MCF 10A (cell line): ENCODE measurements at regions of chr4 and their contacts with region 1.

Region 1: GRCh38 chr4:108060164-108060563 is 70.5 kb downstream of the HADH start:
- DNase-seq: peak; percentile 45
- H3K4me3 Mint-ChIP-seq: no peak overlapping the region
- H3K27ac Mint-ChIP-seq: no peak overlapping the region
- H3K4me1 Mint-ChIP-seq: peaks cover 6% of the 10 kb centered on the region
- H3K27me3 Mint-ChIP-seq: no peaks in the 10 kb centered on the region
- CTCF ChIP-seq: peak; percentile 38

Region 2: GRCh38 chr4:108007984-108008383 is 52.2 kb before region 1 on chr4:
- CTCF ChIA-PET with region 1: no interaction called
- POLR2A ChIA-PET with region 1: no interaction called
- intact Hi-C with region 1: no loop called
- DNase-seq: no peak
- H3K4me3 Mint-ChIP-seq: no peak overlapping the region
- H3K27ac Mint-ChIP-seq: no peak overlapping the region
- H3K4me1 Mint-ChIP-seq: peaks cover 13% of the 10 kb centered on the region
- H3K27me3 Mint-ChIP-seq: no peaks in the 10 kb centered on the region
- CTCF ChIP-seq: no peak

Region 3: GRCh38 chr4:108018040-108018883 is 41.9 kb before region 1 on chr4:
- CTCF ChIA-PET with region 1: interaction called, 31 read pairs
- POLR2A ChIA-PET with region 1: no interaction called
- intact Hi-C with region 1: no loop called
- DNase-seq: peak; percentile 82
- H3K4me3 Mint-ChIP-seq: no peak overlapping the region
- H3K27ac Mint-ChIP-seq: peak overlapping the region; percentile 39
- H3K4me1 Mint-ChIP-seq: no peaks in the 10 kb centered on the region
- H3K27me3 Mint-ChIP-seq: no peaks in the 10 kb centered on the region
- CTCF ChIP-seq: peak; percentile 72

Region 4: GRCh38 chr4:108030332-108030731 is 29.8 kb before region 1 on chr4:
- CTCF ChIA-PET with region 1: interaction called, 14 read pairs
- POLR2A ChIA-PET with region 1: no interaction called
- intact Hi-C with region 1: no loop called
- DNase-seq: peak; percentile 51
- H3K4me3 Mint-ChIP-seq: no peak overlapping the region
- H3K27ac Mint-ChIP-seq: peak overlapping the region; percentile 0
- H3K4me1 Mint-ChIP-seq: no peaks in the 10 kb centered on the region
- H3K27me3 Mint-ChIP-seq: no peaks in the 10 kb centered on the region
- CTCF ChIP-seq: peak; percentile 32

Region 5: DNA sequence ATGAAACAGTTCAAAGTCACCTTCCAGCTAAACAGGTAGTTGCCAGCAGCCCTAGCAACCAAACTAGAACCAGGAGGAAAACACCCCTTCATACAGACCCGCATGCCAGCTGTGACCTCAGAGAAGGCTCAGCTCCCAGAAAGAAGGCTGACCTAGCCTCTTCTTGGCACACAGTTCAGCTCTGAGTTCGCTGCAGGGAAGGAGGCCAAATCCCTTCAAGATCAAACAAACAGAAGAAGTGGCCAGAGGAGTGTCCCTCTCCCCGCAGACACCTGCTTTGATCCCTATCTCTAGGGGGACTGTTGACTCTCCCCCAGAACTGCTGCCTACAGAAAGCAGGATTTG is 14.5 kb before region 1 on chr4:
- CTCF ChIA-PET with region 1: interaction called, 10 read pairs
- POLR2A ChIA-PET with region 1: interaction called, 6 read pairs
- intact Hi-C with region 1: no loop called
- DNase-seq: peak; percentile 78
- H3K4me3 Mint-ChIP-seq: no peak overlapping the region
- H3K27ac Mint-ChIP-seq: peak overlapping the region; percentile 55
- H3K4me1 Mint-ChIP-seq: peaks cover 30% of the 10 kb centered on the region
- H3K27me3 Mint-ChIP-seq: no peaks in the 10 kb centered on the region
- CTCF ChIP-seq: no peak

Region 6: GRCh38 chr4:108492816-108493595 is 432.8 kb after region 1 on chr4:
- CTCF ChIA-PET with region 1: interaction called, 36 read pairs
- POLR2A ChIA-PET with region 1: no interaction called
- intact Hi-C with region 1: loop called (anchors 1 kb)
- DNase-seq: peak; percentile 65
- H3K4me3 Mint-ChIP-seq: no peak overlapping the region
- H3K27ac Mint-ChIP-seq: no peak overlapping the region
- H3K4me1 Mint-ChIP-seq: no peaks in the 10 kb centered on the region
- H3K27me3 Mint-ChIP-seq: no peaks in the 10 kb centered on the region
- CTCF ChIP-seq: peak; percentile 74

Region 7: DNA sequence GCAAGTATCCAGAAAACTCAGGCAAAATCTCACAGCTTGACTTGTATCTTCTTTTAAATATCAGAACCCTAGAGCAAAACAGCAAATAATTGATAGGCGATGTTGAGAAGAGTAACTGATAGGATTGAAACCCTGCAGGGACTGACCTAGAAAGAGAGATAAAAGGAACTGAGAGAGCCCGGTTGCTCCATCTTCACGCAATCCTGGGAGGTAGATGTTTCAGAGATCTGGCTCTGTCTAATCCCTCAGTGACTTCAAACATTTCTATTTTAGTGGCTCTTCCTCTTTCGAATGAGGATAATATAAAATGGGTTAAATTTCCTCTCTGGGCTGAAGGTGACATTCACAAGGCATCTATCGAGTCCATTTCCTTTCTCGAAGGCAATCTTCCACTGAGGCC is 520.9 kb after region 1 on chr4:
- CTCF ChIA-PET with region 1: interaction called, 12 read pairs
- POLR2A ChIA-PET with region 1: no interaction called
- intact Hi-C with region 1: no loop called
- DNase-seq: no peak
- H3K4me3 Mint-ChIP-seq: no peak overlapping the region
- H3K27ac Mint-ChIP-seq: no peak overlapping the region
- H3K4me1 Mint-ChIP-seq: no peaks in the 10 kb centered on the region
- H3K27me3 Mint-ChIP-seq: no peaks in the 10 kb centered on the region
- CTCF ChIP-seq: no peak